ENCODE measurements at regions of chr16 and their contacts with region 1.

Region 1: DNA sequence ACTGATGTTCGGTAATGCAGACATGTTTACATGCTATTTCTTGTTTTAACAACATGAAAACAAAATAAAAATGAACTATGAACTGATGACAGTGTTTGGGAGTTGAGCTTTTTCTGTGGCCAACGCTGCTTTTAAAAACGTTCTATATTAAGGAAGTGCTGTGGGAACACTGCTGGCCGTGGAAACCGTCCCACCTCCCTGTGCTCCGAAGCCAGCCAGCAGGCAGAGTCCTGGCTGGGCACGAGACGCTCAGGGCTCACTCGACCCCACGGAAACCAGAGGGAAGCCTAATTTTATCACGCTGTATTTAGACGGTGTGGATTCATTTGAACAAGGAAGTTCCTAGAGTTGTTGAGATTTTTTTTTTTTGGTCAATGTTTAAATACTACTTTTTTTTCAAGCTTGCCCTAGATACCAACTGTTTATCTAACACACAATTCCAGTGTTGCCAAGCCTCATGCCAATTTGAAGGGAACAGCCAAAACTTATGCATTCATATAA is 25.8 kb downstream of the ADCY9 start:
- DNase-seq: peak; percentile 54 to 78 (median 65)
- ATAC-seq: peak; percentile 70 to 83 (median 79)
- H3K4me3 ChIP-seq: peak overlapping the region in 6 of 12 donors; percentile 2 to 23 (median 8)
- H3K27ac ChIP-seq: peak overlapping the region; percentile 65 to 87 (median 75)
- H3K4me1 ChIP-seq: peaks cover 3 to 70% (median 35%) of the 10 kb centered on the region in 12 donors
- H3K27me3 ChIP-seq: no peaks in the 10 kb centered on the region
- CTCF ChIP-seq: no peak
- POLR2A ChIP-seq: no peak

Region 2: GRCh38 chr16:4053301-4053845 is 37.0 kb before region 1 on chr16:
- intact Hi-C with region 1: loop called in 3 of 10 experiments (anchors 5 to 10 kb)
- DNase-seq: peak; percentile 75 to 90 (median 79)
- ATAC-seq: peak; percentile 88 to 93 (median 92)
- H3K4me3 ChIP-seq: peak overlapping the region in 9 of 12 donors; percentile 9 to 36 (median 26)
- H3K27ac ChIP-seq: peak overlapping the region; percentile 70 to 92 (median 86)
- H3K4me1 ChIP-seq: peaks cover 0 to 34% (median 22%) of the 10 kb centered on the region in 12 donors
- H3K27me3 ChIP-seq: no peaks in the 10 kb centered on the region
- CTCF ChIP-seq: no peak
- POLR2A ChIP-seq: no peak

Region 3: DNA sequence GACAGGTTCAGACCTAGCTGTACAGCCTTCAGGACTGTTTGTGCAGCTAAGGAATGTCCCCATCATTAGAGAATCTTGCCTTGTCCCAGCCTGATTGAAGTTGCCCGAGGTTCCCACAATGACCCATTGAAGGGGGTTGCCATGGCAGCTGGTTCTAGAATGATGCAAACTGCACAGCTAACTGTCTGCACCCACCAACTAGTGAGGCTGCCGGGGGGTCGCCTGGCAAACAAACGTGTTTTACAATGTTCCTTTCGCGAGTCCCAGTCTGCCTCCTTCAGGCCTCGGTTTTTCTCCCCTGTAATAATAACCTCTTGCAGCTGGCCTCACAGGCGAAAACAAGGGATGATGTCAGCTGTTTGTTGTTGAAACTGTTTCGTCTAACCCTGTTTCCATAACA is 471.2 kb after region 1 on chr16:
- intact Hi-C with region 1: no loop called
- DNase-seq: no peak
- ATAC-seq: no peak
- H3K4me3 ChIP-seq: no peak overlapping the region
- H3K27ac ChIP-seq: no peak overlapping the region
- H3K4me1 ChIP-seq: no peaks in the 10 kb centered on the region
- H3K27me3 ChIP-seq: no peaks in the 10 kb centered on the region
- CTCF ChIP-seq: no peak
- POLR2A ChIP-seq: no peak

Measured in heart left ventricle (tissue), 16 donors.